Activated CD4-positive, alpha-beta T cell treated with anti-CD3 and anti-CD28 coated beads for 36 hours (primary cell): ENCODE measurements at regions of chr7 and their contacts with region 1.

Region 1: GRCh38 chr7:151110941-151111645 is 24.8 kb downstream of the AGAP3 start:
- DNase-seq: peak; percentile 85
- ATAC-seq: peak; percentile 90
- H3K4me3 Mint-ChIP-seq: no peak overlapping the region
- H3K27ac Mint-ChIP-seq: no peak overlapping the region
- H3K4me1 Mint-ChIP-seq: no peaks in the 10 kb centered on the region
- H3K27me3 Mint-ChIP-seq: peaks cover 3% of the 10 kb centered on the region

Region 2: DNA sequence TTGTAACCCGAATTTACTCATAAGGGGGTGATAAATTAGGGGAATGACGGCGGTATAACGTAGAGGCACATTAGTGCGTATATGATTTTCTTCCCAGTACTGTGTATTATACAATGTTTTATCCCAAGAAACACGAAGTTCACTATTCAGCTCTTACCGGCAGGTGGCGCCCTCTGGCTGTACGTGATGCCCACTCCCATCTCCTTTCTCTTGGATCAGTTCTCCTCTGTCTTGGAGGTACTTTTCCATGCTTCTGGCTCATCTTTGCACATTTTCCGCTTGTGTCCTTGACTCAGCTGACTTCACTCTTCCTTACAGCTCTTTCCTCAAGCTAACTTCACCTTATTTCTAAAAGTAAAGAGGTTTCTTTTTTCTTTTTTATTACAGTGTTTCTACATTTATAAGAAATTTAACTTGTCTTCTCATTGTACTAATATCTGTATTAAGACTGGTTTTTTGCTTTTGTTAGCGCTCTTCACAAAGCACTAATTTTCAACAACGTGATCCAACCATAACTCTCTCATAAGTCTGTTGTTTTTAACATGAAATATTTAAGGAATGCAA is 332.3 kb before region 1 on chr7:
- CTCF ChIA-PET with region 1: no interaction called
- POLR2A ChIA-PET with region 1: no interaction called
- intact Hi-C with region 1: loop called in 1 of 2 experiments (anchors 5 kb)
- DNase-seq: peak; percentile 88
- ATAC-seq: peak; percentile 75
- H3K4me3 Mint-ChIP-seq: no peak overlapping the region
- H3K27ac Mint-ChIP-seq: no peak overlapping the region
- H3K4me1 Mint-ChIP-seq: peaks cover 4% of the 10 kb centered on the region
- H3K27me3 Mint-ChIP-seq: peaks cover 3% of the 10 kb centered on the region

Region 3: DNA sequence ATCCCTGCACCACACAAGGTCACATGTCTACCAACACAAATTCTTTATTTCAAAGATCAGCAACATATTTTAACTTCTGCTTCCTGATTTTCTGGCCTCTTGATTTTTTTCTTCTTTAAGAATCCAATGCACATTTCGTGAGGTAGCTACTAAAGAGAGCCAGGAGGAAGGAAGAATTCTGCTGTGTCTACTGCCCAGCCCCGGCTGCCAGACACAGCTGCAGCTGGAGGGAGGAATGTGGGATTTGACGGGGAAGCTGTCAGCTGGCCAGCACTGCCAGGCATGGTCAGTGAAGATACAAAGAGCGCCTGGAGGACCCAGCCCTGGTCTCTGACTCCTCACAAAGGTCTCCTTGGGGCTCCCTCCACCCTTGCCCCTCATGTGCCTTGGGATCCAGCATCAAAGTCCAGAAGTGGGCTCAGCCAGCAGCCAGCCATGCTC is 265.7 kb before region 1 on chr7:
- CTCF ChIA-PET with region 1: no interaction called
- POLR2A ChIA-PET with region 1: interaction called, 13 read pairs
- intact Hi-C with region 1: no loop called
- DNase-seq: no peak
- ATAC-seq: no peak
- H3K4me3 Mint-ChIP-seq: no peak overlapping the region
- H3K27ac Mint-ChIP-seq: no peak overlapping the region
- H3K4me1 Mint-ChIP-seq: no peaks in the 10 kb centered on the region
- H3K27me3 Mint-ChIP-seq: peaks cover 4% of the 10 kb centered on the region

Region 4: GRCh38 chr7:150898475-150899011 is 212.6 kb before region 1 on chr7:
- CTCF ChIA-PET with region 1: interaction called, 9 read pairs
- POLR2A ChIA-PET with region 1: no interaction called
- intact Hi-C with region 1: loop called (anchors 1 to 5 kb)
- DNase-seq: peak; percentile 89
- ATAC-seq: peak; percentile 86
- H3K4me3 Mint-ChIP-seq: no peak overlapping the region
- H3K27ac Mint-ChIP-seq: peak overlapping the region; percentile 15
- H3K4me1 Mint-ChIP-seq: peaks cover 12% of the 10 kb centered on the region
- H3K27me3 Mint-ChIP-seq: peaks cover 31% of the 10 kb centered on the region

Region 5: DNA sequence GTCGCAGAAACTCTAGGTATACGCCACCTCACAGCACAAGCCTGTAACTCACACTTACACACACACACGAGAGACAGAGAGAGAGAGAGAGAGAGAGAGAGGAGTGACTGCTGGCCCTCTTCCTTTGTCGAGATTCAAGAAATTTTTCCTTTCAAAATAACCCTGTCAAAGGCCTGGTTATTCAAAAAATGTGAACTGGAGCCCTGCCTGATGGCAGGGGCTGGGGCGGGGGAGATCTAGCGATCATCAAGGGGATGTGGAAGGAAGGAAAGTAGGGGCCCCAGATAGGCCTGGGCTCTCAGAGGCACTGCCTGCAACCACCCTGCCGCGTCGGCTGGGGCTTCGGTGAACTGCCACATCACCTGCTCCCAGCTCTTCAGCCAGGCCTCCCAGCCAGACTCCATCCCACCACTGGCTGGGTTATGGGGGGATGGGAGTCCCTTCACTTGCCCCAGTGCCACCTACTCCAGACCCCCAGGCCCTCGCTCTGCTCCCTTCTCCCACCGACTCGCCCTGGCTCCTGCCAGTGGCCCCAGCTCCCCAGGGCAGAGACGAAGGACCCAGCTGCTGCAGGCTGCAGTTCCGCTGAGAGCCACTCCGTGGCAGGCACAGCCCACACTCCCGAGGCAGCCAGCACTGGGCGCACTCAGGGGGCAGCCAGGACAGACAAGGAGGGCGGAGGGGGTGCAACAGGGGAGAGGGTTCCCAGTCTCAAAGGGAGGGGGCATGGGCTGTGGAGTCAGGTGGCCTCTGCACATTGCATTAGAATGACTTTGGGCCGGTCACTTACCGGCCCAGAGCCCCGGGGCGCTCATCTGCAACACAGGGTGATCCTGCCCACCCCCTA is 148.3 kb before region 1 on chr7:
- CTCF ChIA-PET with region 1: interaction called, 13 read pairs
- POLR2A ChIA-PET with region 1: no interaction called
- intact Hi-C with region 1: loop called (anchors 1 to 2 kb)
- DNase-seq: peak; percentile 78
- ATAC-seq: peak; percentile 93
- H3K4me3 Mint-ChIP-seq: no peak overlapping the region
- H3K27ac Mint-ChIP-seq: no peak overlapping the region
- H3K4me1 Mint-ChIP-seq: peaks cover 18% of the 10 kb centered on the region
- H3K27me3 Mint-ChIP-seq: peaks cover 21% of the 10 kb centered on the region

Region 6: GRCh38 chr7:151085691-151086620 is 25.1 kb before region 1 on chr7 and contains the start of gene AGAP3:
- CTCF ChIA-PET with region 1: interaction called, 17 read pairs
- POLR2A ChIA-PET with region 1: no interaction called
- intact Hi-C with region 1: loop called in 1 of 2 experiments (anchors 1 kb)
- DNase-seq: peak; percentile 73
- ATAC-seq: peak; percentile 8
- H3K4me3 Mint-ChIP-seq: peak within 1 kb of the TSS; percentile 81
- H3K27ac Mint-ChIP-seq: peak within 1 kb of the TSS; percentile 84
- H3K4me1 Mint-ChIP-seq: peaks cover 43% of the 10 kb centered on the region
- H3K27me3 Mint-ChIP-seq: peaks cover 7% of the 10 kb centered on the region
- total RNA-seq, gene AGAP3: 29.4 to 33.2 TPM

Region 7: GRCh38 chr7:151095123-151095797 is 15.8 kb before region 1 on chr7:
- CTCF ChIA-PET with region 1: interaction called, 17 read pairs
- POLR2A ChIA-PET with region 1: no interaction called
- intact Hi-C with region 1: loop called in 1 of 2 experiments (anchors 2 kb)
- DNase-seq: no peak
- ATAC-seq: peak; percentile 39
- H3K4me3 Mint-ChIP-seq: no peak overlapping the region
- H3K27ac Mint-ChIP-seq: no peak overlapping the region
- H3K4me1 Mint-ChIP-seq: peaks cover 9% of the 10 kb centered on the region
- H3K27me3 Mint-ChIP-seq: no peaks in the 10 kb centered on the region

Region 8: GRCh38 chr7:151310578-151310977 is 199.5 kb after region 1 on chr7:
- CTCF ChIA-PET with region 1: no interaction called
- POLR2A ChIA-PET with region 1: no interaction called
- intact Hi-C with region 1: no loop called
- DNase-seq: no peak
- ATAC-seq: no peak
- H3K4me3 Mint-ChIP-seq: no peak overlapping the region
- H3K27ac Mint-ChIP-seq: no peak overlapping the region
- H3K4me1 Mint-ChIP-seq: peaks cover 12% of the 10 kb centered on the region
- H3K27me3 Mint-ChIP-seq: peaks cover 6% of the 10 kb centered on the region